ENCODE measurements at regions of chr7 and their contacts with region 1.

Region 1: GRCh38 chr7:43582503-43583423 is at the start of gene STK17A:
- DNase-seq: no peak
- H3K4me3 ChIP-seq: peak within 1 kb of the TSS; percentile 85
- CTCF ChIP-seq: peak; percentile 100

Region 2: DNA sequence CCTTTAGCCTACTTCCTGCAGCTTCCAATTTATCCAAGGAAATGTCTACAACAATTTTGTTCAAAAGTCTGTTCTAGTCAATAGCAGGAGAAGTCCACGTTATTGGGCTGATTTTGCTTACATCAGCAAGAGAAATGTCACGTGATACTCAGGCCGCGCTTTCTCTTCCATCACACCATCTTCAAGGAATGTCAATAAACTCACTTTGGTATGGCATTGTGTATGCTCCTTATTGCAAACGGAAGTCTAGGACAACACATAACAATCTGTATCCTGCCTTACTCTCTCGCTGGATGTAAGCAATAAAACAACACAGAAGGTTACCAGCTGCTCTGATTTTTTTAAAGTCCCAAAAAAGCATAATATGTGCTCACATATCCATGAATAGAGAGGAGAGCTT is 17.0 kb before region 1 on chr7:
- CTCF ChIA-PET with region 1: interaction called, 109 read pairs
- POLR2A ChIA-PET with region 1: no interaction called
- DNase-seq: no peak
- H3K4me3 ChIP-seq: no peak overlapping the region
- CTCF ChIP-seq: no peak

Region 3: GRCh38 chr7:43612599-43613589 is 30.1 kb after region 1 on chr7:
- CTCF ChIA-PET with region 1: interaction called, 28 read pairs
- POLR2A ChIA-PET with region 1: interaction called, 10 read pairs
- DNase-seq: peak; percentile 28
- H3K4me3 ChIP-seq: no peak overlapping the region
- CTCF ChIP-seq: no peak

Region 4: GRCh38 chr7:43639858-43640491 is 57.2 kb after region 1 on chr7:
- CTCF ChIA-PET with region 1: interaction called, 36 read pairs
- POLR2A ChIA-PET with region 1: interaction called, 3 read pairs
- DNase-seq: no peak
- H3K4me3 ChIP-seq: no peak overlapping the region
- CTCF ChIP-seq: no peak

Region 5: DNA sequence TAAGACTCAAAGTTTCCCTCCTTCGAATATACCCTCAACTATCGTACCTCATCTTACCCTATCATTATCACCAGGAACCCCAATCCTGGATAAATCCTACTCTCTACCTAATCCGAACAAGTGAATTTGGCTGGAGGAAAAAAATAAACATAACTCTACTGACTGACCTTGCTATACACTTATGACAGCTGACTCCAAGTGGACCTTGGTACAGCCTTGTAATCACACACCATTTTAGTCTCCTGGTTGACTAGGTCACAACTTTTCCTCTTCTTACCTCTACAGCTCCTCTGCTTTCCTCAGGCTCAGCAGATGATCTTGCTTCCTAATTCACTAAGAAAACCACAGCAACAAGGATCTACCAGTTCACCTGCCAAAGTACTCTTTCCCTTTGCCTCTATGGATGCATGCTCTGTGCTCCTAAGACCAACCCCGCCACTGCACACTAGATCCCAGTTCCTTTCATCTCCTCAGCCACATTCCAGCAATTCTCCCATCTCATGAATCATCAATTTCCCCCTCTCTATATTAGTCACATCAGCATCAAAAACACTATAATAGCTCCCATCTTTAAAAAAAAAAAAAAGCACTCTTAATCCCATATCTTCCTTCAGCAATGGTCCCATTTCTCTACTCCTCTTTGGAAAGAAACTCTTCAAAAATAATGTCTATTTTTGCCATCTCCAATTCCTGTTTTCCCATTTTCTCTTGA is 111.1 kb after region 1 on chr7:
- CTCF ChIA-PET with region 1: interaction called, 497 read pairs
- POLR2A ChIA-PET with region 1: interaction called, 51 read pairs
- DNase-seq: no peak
- H3K4me3 ChIP-seq: no peak overlapping the region
- CTCF ChIP-seq: no peak

Region 6: DNA sequence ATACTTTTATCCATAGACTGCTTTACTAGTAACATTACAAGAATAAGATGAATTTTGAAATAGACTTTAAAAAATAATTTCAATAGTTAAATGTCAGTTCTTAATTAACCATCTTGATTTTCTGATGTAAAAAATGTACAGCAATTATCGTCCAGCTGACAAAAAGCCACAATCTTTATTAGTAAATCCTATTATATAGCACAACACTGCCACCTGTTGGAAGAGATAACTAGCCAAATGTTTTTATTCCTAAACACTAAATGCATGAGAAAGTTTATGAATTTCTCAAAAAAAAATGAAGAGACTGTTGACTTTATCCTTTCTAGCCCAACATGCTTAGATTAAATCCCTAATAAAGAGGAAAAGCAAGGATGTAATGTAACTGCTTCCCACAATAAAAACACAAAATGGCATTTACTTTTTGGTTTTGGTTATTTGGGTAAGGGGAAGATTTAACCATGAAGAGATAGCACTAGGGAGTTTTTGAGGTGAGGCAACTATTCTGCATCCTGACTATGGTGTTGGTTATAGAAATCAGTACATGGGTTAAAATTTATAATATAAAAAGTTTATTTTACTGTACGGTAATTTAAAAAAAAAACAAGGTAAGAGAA is 138.5 kb after region 1 on chr7:
- CTCF ChIA-PET with region 1: interaction called, 198 read pairs
- POLR2A ChIA-PET with region 1: interaction called, 9 read pairs
- DNase-seq: no peak
- H3K4me3 ChIP-seq: no peak overlapping the region
- CTCF ChIP-seq: no peak

Region 7: GRCh38 chr7:43844031-43844656 is 261.4 kb after region 1 on chr7:
- CTCF ChIA-PET with region 1: interaction called, 73 read pairs
- POLR2A ChIA-PET with region 1: no interaction called
- DNase-seq: no peak
- H3K4me3 ChIP-seq: no peak overlapping the region
- CTCF ChIP-seq: no peak